B cell (primary cell): ENCODE measurements at regions of chr10 and their contacts with region 1.

Region 1: GRCh38 chr10:124565565-124566256 is 104.1 kb downstream of the LHPP start:
- DNase-seq: peak; percentile 49
- ATAC-seq: peak; percentile 45
- H3K4me3 ChIP-seq: no peak overlapping the region
- H3K4me3 Mint-ChIP-seq: no peak overlapping the region
- H3K27ac ChIP-seq: no peak overlapping the region
- H3K27ac Mint-ChIP-seq: no peak overlapping the region
- H3K4me1 ChIP-seq: peaks cover 35 to 40% of the 10 kb centered on the region in 2 donors
- H3K4me1 Mint-ChIP-seq: peaks cover 51% of the 10 kb centered on the region
- H3K27me3 ChIP-seq: no peaks in the 10 kb centered on the region
- H3K27me3 Mint-ChIP-seq: no peaks in the 10 kb centered on the region
- CTCF ChIP-seq: no peak

Region 2: DNA sequence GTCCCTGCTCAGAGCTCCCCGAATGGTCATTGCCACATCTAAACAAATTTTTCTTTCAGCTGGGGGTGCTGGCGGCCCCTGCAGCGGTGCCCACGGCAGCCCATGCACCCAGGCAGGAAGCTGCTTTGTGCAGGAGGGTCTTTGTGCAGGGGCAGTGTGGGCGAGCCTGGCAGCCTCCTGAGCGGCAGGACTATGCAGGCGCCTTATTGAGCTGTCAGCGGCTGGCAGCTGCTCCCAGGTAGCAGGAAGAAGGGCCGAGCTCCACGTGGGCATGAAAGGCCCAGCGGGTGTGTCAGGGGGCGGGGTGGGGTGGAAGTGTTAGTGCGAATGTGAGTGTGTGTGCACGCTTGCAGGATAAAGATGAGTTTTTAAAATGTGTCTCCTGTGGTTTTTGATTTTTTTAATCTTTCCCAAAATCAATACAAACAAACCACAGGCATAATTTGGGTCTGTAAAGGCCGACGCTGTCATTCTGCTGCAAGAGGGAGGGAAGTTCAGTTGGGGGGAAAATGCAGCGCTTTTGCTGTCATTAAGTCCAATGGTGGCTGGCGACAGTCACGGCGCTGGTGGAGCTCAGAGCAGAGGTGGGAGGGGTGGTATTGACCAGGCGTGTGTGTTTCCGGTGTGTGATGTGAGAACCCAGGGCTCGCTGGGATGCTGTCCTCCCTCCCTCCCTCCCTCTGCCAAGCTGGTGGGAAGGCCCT is 20.2 kb before region 1 on chr10:
- CTCF ChIA-PET with region 1: interaction called, 22 read pairs
- POLR2A ChIA-PET with region 1: interaction called, 3 read pairs
- intact Hi-C with region 1: loop called (anchors 2 kb)
- DNase-seq: no peak
- ATAC-seq: no peak
- H3K4me3 ChIP-seq: peak overlapping the region in 4 of 5 experiments; percentile 13 to 34 (median 22)
- H3K4me3 Mint-ChIP-seq: peak overlapping the region; percentile 78
- H3K27ac ChIP-seq: peak overlapping the region; percentile 64 to 70
- H3K27ac Mint-ChIP-seq: peak overlapping the region; percentile 91
- H3K4me1 ChIP-seq: peaks cover 98 to 100% of the 10 kb centered on the region in 2 donors
- H3K4me1 Mint-ChIP-seq: peaks cover 91% of the 10 kb centered on the region
- H3K27me3 ChIP-seq: no peaks in the 10 kb centered on the region
- H3K27me3 Mint-ChIP-seq: no peaks in the 10 kb centered on the region
- CTCF ChIP-seq: no peak

Region 3: GRCh38 chr10:124827474-124827873 is 261.8 kb after region 1 on chr10:
- CTCF ChIA-PET with region 1: no interaction called
- POLR2A ChIA-PET with region 1: no interaction called
- intact Hi-C with region 1: no loop called
- DNase-seq: peak; percentile 30
- ATAC-seq: no peak
- H3K4me3 ChIP-seq: no peak overlapping the region
- H3K4me3 Mint-ChIP-seq: no peak overlapping the region
- H3K27ac ChIP-seq: no peak overlapping the region
- H3K27ac Mint-ChIP-seq: no peak overlapping the region
- H3K4me1 ChIP-seq: no peaks in the 10 kb centered on the region
- H3K4me1 Mint-ChIP-seq: no peaks in the 10 kb centered on the region
- H3K27me3 ChIP-seq: no peaks in the 10 kb centered on the region
- H3K27me3 Mint-ChIP-seq: no peaks in the 10 kb centered on the region
- CTCF ChIP-seq: peak; percentile 81